ENCODE measurements at regions of chr7 and their contacts with region 1.

Region 1: GRCh38 chr7:135160098-135160857 is 10.2 kb downstream of the CYREN start:
- DNase-seq: no peak
- ATAC-seq: peak; percentile 56 to 68 (median 59)
- H3K4me3 ChIP-seq: no peak overlapping the region
- H3K4me3 Mint-ChIP-seq: peak overlapping the region; percentile 75
- H3K27ac ChIP-seq: peak overlapping the region; percentile 16
- H3K27ac Mint-ChIP-seq: peak overlapping the region; percentile 80 to 89
- H3K4me1 ChIP-seq: peaks cover 37% of the 10 kb centered on the region
- H3K4me1 Mint-ChIP-seq: peaks cover 70 to 74% of the 10 kb centered on the region in 2 donors
- H3K27me3 ChIP-seq: no peaks in the 10 kb centered on the region
- H3K27me3 Mint-ChIP-seq: no peaks in the 10 kb centered on the region
- CTCF ChIP-seq: no peak

Region 2: GRCh38 chr7:135102372-135102771 is 57.9 kb before region 1 on chr7:
- intact Hi-C with region 1: loop called (anchors 2 kb)
- DNase-seq: no peak
- ATAC-seq: no peak
- H3K4me3 ChIP-seq: no peak overlapping the region
- H3K4me3 Mint-ChIP-seq: no peak overlapping the region
- H3K27ac ChIP-seq: no peak overlapping the region
- H3K27ac Mint-ChIP-seq: no peak overlapping the region
- H3K4me1 ChIP-seq: no peaks in the 10 kb centered on the region
- H3K4me1 Mint-ChIP-seq: no peaks in the 10 kb centered on the region
- H3K27me3 ChIP-seq: no peaks in the 10 kb centered on the region
- H3K27me3 Mint-ChIP-seq: no peaks in the 10 kb centered on the region
- CTCF ChIP-seq: no peak